CD8-positive, alpha-beta T cell (primary cell): ENCODE measurements at regions of chr1 and their contacts with region 1.

Region 1: GRCh38 chr1:182229921-182230491 is 161.6 kb downstream of the GLUL start:
- DNase-seq: no peak
- ATAC-seq: no peak
- H3K4me3 ChIP-seq: no peak overlapping the region
- H3K4me3 Mint-ChIP-seq: no peak overlapping the region
- H3K27ac ChIP-seq: no peak overlapping the region
- H3K27ac Mint-ChIP-seq: no peak overlapping the region
- H3K4me1 ChIP-seq: peaks cover under 1% of the 10 kb centered on the region
- H3K4me1 Mint-ChIP-seq: peaks cover under 1% of the 10 kb centered on the region
- H3K27me3 ChIP-seq: no peaks in the 10 kb centered on the region
- H3K27me3 Mint-ChIP-seq: no peaks in the 10 kb centered on the region
- CTCF ChIP-seq: no peak

Region 2: GRCh38 chr1:182279724-182280503 is 49.9 kb after region 1 on chr1:
- CTCF ChIA-PET with region 1: no interaction called
- POLR2A ChIA-PET with region 1: no interaction called
- intact Hi-C with region 1: loop called in 1 of 2 experiments (anchors 10 kb)
- DNase-seq: no peak
- ATAC-seq: no peak
- H3K4me3 ChIP-seq: no peak overlapping the region
- H3K4me3 Mint-ChIP-seq: no peak overlapping the region
- H3K27ac ChIP-seq: no peak overlapping the region
- H3K27ac Mint-ChIP-seq: no peak overlapping the region
- H3K4me1 ChIP-seq: no peaks in the 10 kb centered on the region
- H3K4me1 Mint-ChIP-seq: peaks cover 2% of the 10 kb centered on the region
- H3K27me3 ChIP-seq: no peaks in the 10 kb centered on the region
- H3K27me3 Mint-ChIP-seq: no peaks in the 10 kb centered on the region
- CTCF ChIP-seq: no peak